ENCODE measurements at regions of chr4 and their contacts with region 1.

Region 1: GRCh38 chr4:147866532-147867271 is 134.8 kb downstream of the ARHGAP10 start:
- DNase-seq: peak; percentile 96 to 98
- H3K4me3 ChIP-seq: no peak overlapping the region
- H3K27ac ChIP-seq: peak overlapping the region in 1 of 3 donors; percentile 30
- H3K4me1 ChIP-seq: peaks cover 0 to 3% of the 10 kb centered on the region in 2 donors
- H3K27me3 ChIP-seq: no peaks in the 10 kb centered on the region
- CTCF ChIP-seq: peak; percentile 91 to 100 (median 98)
- POLR2A ChIP-seq: no peak

Region 2: GRCh38 chr4:147707865-147708672 is 158.6 kb before region 1 on chr4:
- intact Hi-C with region 1: loop called (anchors 2 kb)
- DNase-seq: peak; percentile 59 to 66
- H3K4me3 ChIP-seq: no peak overlapping the region
- H3K27ac ChIP-seq: no peak overlapping the region
- H3K4me1 ChIP-seq: no peaks in the 10 kb centered on the region
- H3K27me3 ChIP-seq: no peaks in the 10 kb centered on the region
- CTCF ChIP-seq: peak; percentile 63 to 97 (median 89)
- POLR2A ChIP-seq: no peak

Region 3: DNA sequence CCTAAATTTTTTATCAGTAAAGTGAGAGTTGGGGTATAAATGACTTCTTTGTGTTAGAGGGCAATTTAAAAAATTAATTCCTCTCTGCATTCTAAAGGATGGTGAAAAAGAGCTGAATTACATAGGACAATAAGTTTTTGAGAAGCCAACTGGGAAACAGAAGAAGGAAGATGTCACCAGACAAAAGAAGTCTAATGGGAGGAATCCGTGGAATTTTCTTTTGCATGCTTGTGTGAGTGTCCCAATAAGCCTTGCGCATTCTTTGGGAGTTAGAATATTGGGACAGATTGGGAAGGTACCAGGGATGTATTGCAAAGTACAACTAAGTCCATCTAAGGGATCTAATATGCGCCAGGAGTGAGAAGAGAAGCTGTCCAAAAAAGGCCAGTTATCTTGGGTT is 610.6 kb after region 1 on chr4:
- intact Hi-C with region 1: no loop called
- DNase-seq: no peak
- H3K4me3 ChIP-seq: no peak overlapping the region
- H3K27ac ChIP-seq: no peak overlapping the region
- H3K4me1 ChIP-seq: no peaks in the 10 kb centered on the region
- H3K27me3 ChIP-seq: no peaks in the 10 kb centered on the region
- CTCF ChIP-seq: no peak
- POLR2A ChIP-seq: no peak